Common myeloid progenitor, CD34-positive (primary cell): ENCODE measurements at regions of chr9 and their contacts with region 1.

Region 1: GRCh38 chr9:93143830-93144530 is 9.9 kb upstream of the NINJ1 start:
- DNase-seq: peak; percentile 75 to 93 (median 89)
- H3K4me3 ChIP-seq: peak overlapping the region in 1 of 7 experiments; percentile 42
- H3K27ac ChIP-seq: no peak overlapping the region
- H3K4me1 ChIP-seq: peaks cover 6 to 47% (median 24%) of the 10 kb centered on the region in 4 experiments
- H3K27me3 ChIP-seq: no peaks in the 10 kb centered on the region

Region 2: GRCh38 chr9:92980085-92980745 is 163.8 kb before region 1 on chr9:
- CTCF ChIA-PET with region 1: no interaction called
- POLR2A ChIA-PET with region 1: interaction called, 11 read pairs
- DNase-seq: no peak
- H3K4me3 ChIP-seq: no peak overlapping the region
- H3K27ac ChIP-seq: no peak overlapping the region
- H3K4me1 ChIP-seq: peaks cover 3 to 21% (median 6%) of the 10 kb centered on the region in 4 experiments
- H3K27me3 ChIP-seq: no peaks in the 10 kb centered on the region

Region 3: GRCh38 chr9:93154315-93154903 is 10.4 kb after region 1 on chr9:
- CTCF ChIA-PET with region 1: interaction called, 15 read pairs
- POLR2A ChIA-PET with region 1: no interaction called
- DNase-seq: peak; percentile 41 to 61 (median 55)
- H3K4me3 ChIP-seq: no peak overlapping the region
- H3K27ac ChIP-seq: no peak overlapping the region
- H3K4me1 ChIP-seq: no peaks in the 10 kb centered on the region
- H3K27me3 ChIP-seq: no peaks in the 10 kb centered on the region